H1 (cell line): ENCODE measurements at regions of chr1 and their contacts with region 1.

Region 1: DNA sequence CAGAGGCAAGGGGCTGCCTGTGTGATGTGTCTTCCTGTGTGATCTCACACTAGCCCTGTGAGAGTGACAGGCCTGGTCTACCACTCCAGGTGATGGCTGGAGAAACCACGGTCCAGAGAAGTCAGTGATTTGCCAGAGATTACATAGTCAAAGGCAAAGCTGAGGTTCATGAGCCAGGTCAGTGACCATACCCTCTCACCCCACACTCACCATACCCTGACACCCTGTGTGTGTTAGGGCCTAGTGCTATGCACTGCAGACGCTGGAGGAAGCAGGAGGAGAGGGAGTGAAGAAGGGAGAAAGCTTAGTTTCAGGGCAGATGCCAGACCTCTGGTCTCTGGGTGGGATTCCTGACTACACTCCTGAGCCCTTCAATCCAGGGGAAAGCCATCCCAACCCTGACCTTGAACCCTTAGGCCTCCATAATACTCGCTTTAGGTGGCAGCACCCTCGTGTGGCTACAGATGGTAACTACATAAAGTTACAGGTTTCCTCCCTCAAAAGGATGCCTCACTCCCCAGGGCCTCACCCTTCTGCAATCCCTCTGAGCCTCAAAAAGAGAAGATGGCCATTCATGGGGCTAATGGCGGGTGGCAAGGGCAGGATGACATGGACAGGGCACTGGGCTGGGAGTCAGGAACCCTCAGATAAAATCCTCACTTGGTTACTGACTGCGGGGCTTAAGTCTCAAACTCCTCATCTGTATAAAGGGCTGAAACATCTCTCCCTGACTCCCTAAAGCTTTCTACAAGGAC is 20.8 kb upstream of the SDC3 start:
- DNase-seq: peak; percentile 25 to 86
- H3K4me3 ChIP-seq: no peak overlapping the region
- H3K27ac ChIP-seq: no peak overlapping the region
- H3K4me1 ChIP-seq: no peaks in the 10 kb centered on the region
- H3K27me3 ChIP-seq: no peaks in the 10 kb centered on the region
- CTCF ChIP-seq: peak; percentile 47 to 86 (median 69)
- EP300 ChIP-seq: no peak
- POLR2A ChIP-seq: no peak
- RAD21 ChIP-seq: peak; percentile 83 to 88

Region 2: DNA sequence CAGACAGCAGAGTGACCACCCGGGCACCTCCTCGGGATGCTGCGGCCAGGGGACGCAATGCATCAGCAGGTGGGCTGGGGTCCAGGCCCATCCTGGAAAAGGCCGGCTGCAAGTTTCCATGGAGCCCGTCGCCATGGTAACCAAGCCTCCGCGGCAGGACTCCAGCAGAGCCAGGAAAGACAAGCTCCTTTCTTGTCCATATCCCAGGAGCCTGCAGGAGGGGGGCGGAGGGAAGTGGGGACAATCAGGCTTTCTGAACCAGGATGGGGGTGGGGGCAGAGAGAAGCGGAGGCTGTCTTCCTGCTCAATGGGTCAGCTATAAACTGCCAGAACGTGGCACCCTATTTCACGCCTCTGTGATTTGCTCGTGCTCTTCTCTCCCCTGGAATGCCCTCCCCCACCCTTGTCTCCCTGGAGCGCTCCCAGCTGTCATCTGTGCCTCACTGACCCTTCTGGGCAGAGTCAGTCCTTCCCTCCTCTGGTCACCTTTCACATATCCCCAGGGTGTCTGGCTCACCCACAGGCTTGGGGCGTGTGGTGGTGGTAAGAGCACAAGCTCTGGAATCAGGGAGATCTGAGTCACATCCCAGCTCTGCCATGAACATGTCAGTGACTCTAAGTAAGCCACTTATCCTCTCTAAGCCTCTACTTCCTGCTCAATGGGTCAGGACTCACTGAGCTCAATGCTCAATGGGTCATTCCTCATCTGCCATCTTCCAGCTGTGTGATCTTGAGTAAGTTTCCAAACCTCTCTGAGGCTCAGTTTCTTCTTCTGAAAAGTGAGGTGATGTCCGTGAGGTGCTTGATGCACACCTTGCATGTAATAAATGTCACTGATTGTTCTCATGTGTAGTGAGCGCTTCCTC is 112.9 kb before region 1 on chr1:
- CTCF ChIA-PET with region 1: interaction called, 1,519 read pairs
- POLR2A ChIA-PET with region 1: no interaction called
- DNase-seq: peak in 1 of 2 experiments; percentile 93
- H3K4me3 ChIP-seq: peak overlapping the region in 2 of 4 experiments; percentile 8 to 29; a peak in 2 of 8 replicates
- H3K27ac ChIP-seq: no peak overlapping the region
- H3K4me1 ChIP-seq: peaks cover 13 to 28% (median 17%) of the 10 kb centered on the region in 4 experiments
- H3K27me3 ChIP-seq: no peaks in the 10 kb centered on the region
- CTCF ChIP-seq: no peak
- EP300 ChIP-seq: no peak
- POLR2A ChIP-seq: no peak
- RAD21 ChIP-seq: no peak

Region 3: DNA sequence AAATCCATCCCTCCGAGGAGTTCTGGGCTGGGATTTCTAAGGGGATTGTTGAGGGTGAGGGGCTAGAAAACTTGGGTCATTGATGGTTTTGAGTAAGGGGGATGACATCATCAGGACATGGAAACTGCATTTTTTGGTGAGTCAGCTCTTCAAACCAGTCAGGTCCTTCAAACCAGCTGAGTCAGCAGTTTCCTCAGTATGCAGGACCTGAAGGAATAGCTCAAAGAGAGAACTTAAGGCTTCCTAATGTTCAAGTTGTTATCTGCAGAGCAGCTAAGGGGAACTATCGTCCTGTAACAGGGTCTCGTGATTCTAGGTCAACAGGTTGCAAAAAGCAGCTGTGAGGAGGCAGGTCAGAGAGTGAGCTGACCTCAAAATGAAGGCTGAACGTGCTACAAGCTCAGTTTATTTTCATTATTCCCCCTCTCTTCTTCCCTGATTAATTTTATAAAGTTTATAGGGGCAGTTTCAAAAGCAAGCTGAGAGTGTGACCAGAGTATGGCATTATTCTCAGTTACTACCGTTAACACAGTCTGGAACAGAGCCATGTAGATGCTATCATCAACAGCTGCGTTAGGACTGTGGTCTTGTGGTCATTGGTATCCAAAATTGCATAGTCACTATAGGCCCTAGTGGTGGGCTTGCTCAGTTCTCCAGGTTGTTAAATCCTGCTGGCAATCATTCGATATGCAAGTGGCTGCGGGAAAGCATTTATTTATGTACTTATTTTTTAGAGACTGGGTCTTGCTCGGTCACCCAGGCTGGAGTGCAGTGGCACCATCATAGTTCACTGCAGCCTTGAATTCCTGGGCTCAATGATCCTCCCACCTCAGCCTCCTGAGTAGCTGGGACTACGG is 10.1 kb before region 1 on chr1:
- CTCF ChIA-PET with region 1: interaction called, 94 read pairs
- POLR2A ChIA-PET with region 1: interaction called, 16 read pairs
- DNase-seq: peak in 1 of 2 experiments; percentile 38
- H3K4me3 ChIP-seq: no peak overlapping the region
- H3K27ac ChIP-seq: no peak overlapping the region
- H3K4me1 ChIP-seq: no peaks in the 10 kb centered on the region
- H3K27me3 ChIP-seq: no peaks in the 10 kb centered on the region
- CTCF ChIP-seq: no peak; a peak in 1 of 4 replicates
- EP300 ChIP-seq: no peak
- POLR2A ChIP-seq: no peak
- RAD21 ChIP-seq: no peak

Region 4: DNA sequence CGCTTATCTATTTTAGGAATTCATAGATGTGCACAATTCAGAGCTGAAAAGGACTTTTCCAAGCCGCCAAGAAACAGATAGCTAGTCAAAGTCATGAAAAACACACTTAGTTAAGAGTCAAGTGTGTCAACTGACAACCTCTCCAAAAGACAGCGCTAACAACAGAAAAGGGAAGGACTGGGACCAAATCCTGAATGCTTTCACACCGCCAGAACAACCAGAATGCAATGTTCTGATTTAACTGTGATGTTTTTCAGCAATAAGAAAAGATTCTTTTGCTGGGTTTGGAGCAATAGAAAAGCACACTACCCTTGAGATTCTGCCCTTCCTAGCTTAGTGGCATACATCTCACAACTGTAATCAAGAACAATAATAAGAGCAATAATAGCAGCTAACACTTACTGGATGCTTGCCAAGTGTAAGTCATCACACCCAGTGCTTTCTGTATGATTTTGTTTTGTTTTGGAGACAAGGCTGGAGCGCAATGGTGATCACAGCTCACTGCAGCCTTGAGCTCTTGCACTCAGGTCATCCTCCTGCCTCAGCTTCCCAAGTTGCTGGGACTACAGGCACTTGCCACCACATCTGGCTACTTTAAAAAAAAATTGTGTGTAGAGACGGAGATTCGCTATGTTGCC is 13.1 kb after region 1 on chr1:
- CTCF ChIA-PET with region 1: interaction called, 6 read pairs
- POLR2A ChIA-PET with region 1: interaction called, 13 read pairs
- DNase-seq: no peak
- H3K4me3 ChIP-seq: no peak overlapping the region
- H3K27ac ChIP-seq: no peak overlapping the region
- H3K4me1 ChIP-seq: no peaks in the 10 kb centered on the region
- H3K27me3 ChIP-seq: no peaks in the 10 kb centered on the region
- CTCF ChIP-seq: no peak
- EP300 ChIP-seq: no peak
- POLR2A ChIP-seq: peak in 1 of 2 experiments; percentile 30; a peak in 1 of 3 replicates
- RAD21 ChIP-seq: no peak